ENCODE measurements at regions of chr11 and their contacts with region 1.

Region 1: GRCh38 chr11:124673333-124674167 is at the starts of genes SIAE and SPA17:
- DNase-seq: peak; percentile 93
- H3K4me3 Mint-ChIP-seq: peak within 1 kb of the TSS; percentile 86
- H3K27ac Mint-ChIP-seq: peak within 1 kb of the TSS; percentile 85
- H3K4me1 Mint-ChIP-seq: peaks cover 38% of the 10 kb centered on the region
- H3K27me3 Mint-ChIP-seq: peaks cover 5% of the 10 kb centered on the region

Region 2: DNA sequence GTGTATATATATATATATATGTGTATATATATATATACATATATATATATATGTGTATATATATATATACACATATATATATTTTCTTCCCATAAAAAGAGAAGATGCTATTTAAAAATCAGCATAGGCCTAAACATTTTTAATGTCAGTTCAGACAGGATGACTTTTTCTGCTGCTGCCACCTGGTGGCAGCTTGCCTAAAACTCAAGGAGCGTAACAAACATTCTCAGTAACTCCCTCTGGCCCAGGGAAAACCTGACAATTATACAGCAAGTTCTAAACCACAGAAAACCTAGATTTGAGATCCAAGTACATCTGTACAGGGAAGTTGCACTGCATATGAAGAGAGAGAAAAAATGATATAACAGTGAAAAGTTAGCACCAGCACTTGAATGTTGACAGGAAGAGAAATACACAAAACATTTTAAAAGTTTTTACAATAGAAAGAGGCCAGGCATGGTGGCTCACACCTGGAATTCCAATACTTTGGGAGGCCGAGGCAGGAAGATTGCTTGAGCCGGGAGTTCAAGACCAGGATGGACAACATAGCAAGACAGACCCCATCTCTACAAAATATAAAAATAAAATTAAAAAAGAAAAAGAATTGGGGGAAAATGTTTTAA is 87.2 kb before region 1 on chr11:
- CTCF ChIA-PET with region 1: no interaction called
- DNase-seq: peak; percentile 52
- H3K4me3 Mint-ChIP-seq: no peak overlapping the region
- H3K27ac Mint-ChIP-seq: no peak overlapping the region
- H3K4me1 Mint-ChIP-seq: no peaks in the 10 kb centered on the region
- H3K27me3 Mint-ChIP-seq: peaks cover 5% of the 10 kb centered on the region

Region 3: DNA sequence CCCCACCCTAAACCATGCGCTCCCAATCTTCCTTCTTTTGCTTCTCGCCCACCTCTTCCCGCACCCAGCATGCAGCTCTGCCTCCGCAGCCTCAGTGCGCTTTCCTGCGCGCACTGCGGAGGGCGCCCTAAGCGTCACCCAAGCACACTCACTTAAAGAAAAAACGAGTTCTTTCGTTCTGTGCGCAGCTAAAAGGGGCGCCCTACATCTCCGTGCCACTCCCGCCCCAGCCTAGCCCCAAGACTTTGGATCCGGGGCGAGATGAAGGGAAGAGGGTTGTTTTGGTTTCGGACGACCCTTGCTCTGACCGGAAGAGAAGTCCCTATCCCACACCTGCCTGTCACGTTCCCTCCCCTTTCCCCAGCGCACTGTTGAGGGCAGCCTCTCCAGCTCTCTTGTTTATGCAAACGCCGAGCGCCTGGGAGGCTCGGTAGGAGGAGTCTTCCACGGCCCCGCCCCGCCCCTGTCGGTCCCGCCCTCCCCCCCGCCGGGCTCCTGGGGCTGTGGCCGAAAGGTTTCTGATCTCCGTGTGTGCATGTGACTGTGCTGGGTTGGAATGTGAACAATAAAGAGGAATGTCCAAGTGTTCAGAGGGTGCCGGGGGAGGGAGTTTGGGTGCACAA is 73.2 kb after region 1 on chr11:
- CTCF ChIA-PET with region 1: interaction called, 27 read pairs
- DNase-seq: peak; percentile 86
- H3K4me3 Mint-ChIP-seq: peak overlapping the region; percentile 84
- H3K27ac Mint-ChIP-seq: peak overlapping the region; percentile 86
- H3K4me1 Mint-ChIP-seq: peaks cover 47% of the 10 kb centered on the region
- H3K27me3 Mint-ChIP-seq: peaks cover 55% of the 10 kb centered on the region

Region 4: GRCh38 chr11:124753205-124753604 is 79.7 kb after region 1 on chr11:
- CTCF ChIA-PET with region 1: interaction called, 14 read pairs
- DNase-seq: no peak
- H3K4me3 Mint-ChIP-seq: no peak overlapping the region
- H3K27ac Mint-ChIP-seq: no peak overlapping the region
- H3K4me1 Mint-ChIP-seq: peaks cover 42% of the 10 kb centered on the region
- H3K27me3 Mint-ChIP-seq: peaks cover 69% of the 10 kb centered on the region

Region 5: DNA sequence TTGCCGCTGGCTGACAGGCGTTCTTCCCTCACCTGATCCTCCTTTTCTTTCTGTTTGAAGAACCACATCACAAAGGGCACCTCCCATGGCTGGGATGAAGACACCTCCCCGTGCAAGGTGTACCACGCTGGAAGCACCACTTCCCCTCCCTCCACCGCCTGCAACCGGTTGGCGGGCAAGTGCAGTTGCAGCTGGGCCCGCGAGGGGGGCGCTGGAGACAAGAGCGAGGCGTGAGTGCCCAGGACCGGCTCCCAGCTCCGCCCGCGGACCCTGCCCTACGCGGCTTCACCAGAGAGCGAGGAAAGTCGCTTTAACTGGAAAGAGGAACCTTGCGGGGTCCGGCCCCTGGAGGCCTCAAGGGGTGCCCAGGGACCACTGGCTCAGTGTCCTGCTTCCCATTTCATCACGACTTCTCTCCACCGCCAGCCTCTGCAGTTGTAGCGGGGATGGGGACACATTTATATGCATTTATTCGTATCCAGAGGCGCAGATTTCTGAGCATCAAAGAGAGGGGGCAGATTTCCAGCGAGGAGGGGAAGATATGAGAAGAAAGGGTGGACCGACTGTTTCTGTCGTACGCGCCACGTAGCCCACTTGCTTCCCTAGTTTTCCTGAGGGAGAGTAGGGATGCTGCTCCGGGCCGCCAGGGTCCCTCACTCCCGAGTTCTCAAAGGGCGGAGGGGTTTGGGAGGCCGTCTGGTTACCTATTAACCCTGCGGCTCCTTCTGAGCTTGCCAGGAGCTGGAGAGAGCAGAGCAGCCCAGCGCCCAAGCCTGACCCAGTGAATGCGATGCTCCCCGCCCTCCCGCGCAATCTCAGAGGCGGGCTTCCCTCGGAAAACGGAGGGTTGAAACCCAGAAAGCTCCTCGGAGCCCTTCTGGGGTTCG is 85.0 kb after region 1 on chr11:
- CTCF ChIA-PET with region 1: interaction called, 95 read pairs
- DNase-seq: peak; percentile 80
- H3K4me3 Mint-ChIP-seq: no peak overlapping the region
- H3K27ac Mint-ChIP-seq: no peak overlapping the region
- H3K4me1 Mint-ChIP-seq: peaks cover 41% of the 10 kb centered on the region
- H3K27me3 Mint-ChIP-seq: peaks cover 77% of the 10 kb centered on the region

Region 6: GRCh38 chr11:124793466-124794278 is 120.1 kb after region 1 on chr11:
- CTCF ChIA-PET with region 1: interaction called, 42 read pairs
- DNase-seq: peak; percentile 40
- H3K4me3 Mint-ChIP-seq: no peak overlapping the region
- H3K27ac Mint-ChIP-seq: no peak overlapping the region
- H3K4me1 Mint-ChIP-seq: peaks cover 38% of the 10 kb centered on the region
- H3K27me3 Mint-ChIP-seq: no peaks in the 10 kb centered on the region

Region 7: GRCh38 chr11:124800226-124800929 is 126.8 kb after region 1 on chr11 and contains the start of gene MSANTD2:
- CTCF ChIA-PET with region 1: interaction called, 42 read pairs
- DNase-seq: peak; percentile 86
- H3K4me3 Mint-ChIP-seq: peak within 1 kb of the TSS; percentile 94
- H3K27ac Mint-ChIP-seq: peak within 1 kb of the TSS; percentile 96
- H3K4me1 Mint-ChIP-seq: peaks cover 27% of the 10 kb centered on the region
- H3K27me3 Mint-ChIP-seq: peaks cover 9% of the 10 kb centered on the region

Region 8: DNA sequence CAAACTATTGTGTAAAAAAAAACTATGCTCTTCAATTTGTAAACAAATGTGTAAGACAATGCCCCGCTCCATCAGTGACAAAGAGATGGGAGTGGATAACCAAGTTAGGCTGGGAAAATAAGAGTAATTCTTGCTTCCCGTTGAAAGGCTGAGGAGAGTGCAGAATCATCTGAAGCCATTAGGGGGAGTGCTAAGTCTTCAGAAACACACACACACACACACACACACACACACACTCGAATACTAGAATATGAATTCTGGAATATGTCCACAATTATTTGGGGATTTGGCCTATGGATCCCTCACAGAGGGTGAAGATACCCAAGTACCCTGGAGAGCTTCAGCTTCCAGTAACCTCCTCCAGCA is 163.9 kb after region 1 on chr11:
- CTCF ChIA-PET with region 1: interaction called, 76 read pairs
- DNase-seq: no peak
- H3K4me3 Mint-ChIP-seq: no peak overlapping the region
- H3K27ac Mint-ChIP-seq: no peak overlapping the region
- H3K4me1 Mint-ChIP-seq: peaks cover 21% of the 10 kb centered on the region
- H3K27me3 Mint-ChIP-seq: peaks cover 86% of the 10 kb centered on the region

Measured in activated naive CD4-positive, alpha-beta T cell treated with anti-CD3 and anti-CD28 coated beads, Interleukin-2, amount 10 ng/mL, durations not matched to agents 7 days and 5 days (primary cell).